Activated CD4-positive, alpha-beta memory T cell treated with anti-CD3 and anti-CD28 coated beads, Interleukin-2, amount 10 ng/mL, durations not matched to agents 7 days and 5 days (primary cell): ENCODE measurements at regions of chr21 and their contacts with region 1.

Region 1: GRCh38 chr21:42309753-42310221 is 5.4 kb downstream of the TFF3 start:
- DNase-seq: peak; percentile 76
- H3K4me3 Mint-ChIP-seq: no peak overlapping the region
- H3K27ac Mint-ChIP-seq: no peak overlapping the region
- H3K4me1 Mint-ChIP-seq: peaks cover 3% of the 10 kb centered on the region
- H3K27me3 Mint-ChIP-seq: peaks cover 16% of the 10 kb centered on the region

Region 2: DNA sequence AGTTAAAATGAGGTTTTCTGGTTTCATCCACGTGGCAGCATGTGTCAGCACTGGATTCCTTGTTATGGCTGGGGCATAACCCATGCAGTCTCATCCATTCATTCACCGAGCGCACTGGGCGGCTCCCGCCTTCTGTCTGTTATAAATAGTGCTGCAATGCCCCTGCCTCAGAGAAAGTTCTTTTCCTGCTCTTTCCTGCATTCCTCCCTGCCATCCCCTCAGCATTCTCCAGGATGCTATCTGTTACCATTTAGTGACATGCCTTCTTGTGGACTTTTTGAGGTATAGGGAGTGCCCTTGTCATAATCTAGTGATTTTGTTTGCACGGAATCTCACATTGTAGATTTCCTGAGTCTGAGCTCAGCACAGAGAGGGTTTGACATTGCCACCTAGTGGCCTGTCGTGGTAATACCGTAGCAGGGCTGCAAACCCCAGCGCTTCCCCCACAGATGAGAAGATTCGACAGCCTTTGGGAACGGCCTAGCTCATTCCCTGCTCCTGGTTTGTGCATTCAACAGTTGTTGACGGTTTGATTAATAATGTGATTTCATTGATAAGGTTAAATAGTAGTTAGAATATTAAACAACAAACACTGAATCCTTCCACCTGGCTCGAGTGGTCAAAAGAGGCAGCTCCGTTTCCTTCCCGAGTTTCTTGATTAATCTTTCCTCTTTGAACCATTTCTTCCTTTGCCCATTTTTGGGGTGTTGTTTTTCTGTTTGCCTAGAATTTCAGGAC is 192.4 kb before region 1 on chr21:
- CTCF ChIA-PET with region 1: no interaction called
- POLR2A ChIA-PET with region 1: no interaction called
- DNase-seq: peak; percentile 72
- H3K4me3 Mint-ChIP-seq: no peak overlapping the region
- H3K27ac Mint-ChIP-seq: no peak overlapping the region
- H3K4me1 Mint-ChIP-seq: peaks cover 27% of the 10 kb centered on the region
- H3K27me3 Mint-ChIP-seq: peaks cover 65% of the 10 kb centered on the region

Region 3: GRCh38 chr21:42164064-42164789 is 145.6 kb before region 1 on chr21:
- CTCF ChIA-PET with region 1: no interaction called
- POLR2A ChIA-PET with region 1: no interaction called
- DNase-seq: peak; percentile 71
- H3K4me3 Mint-ChIP-seq: no peak overlapping the region
- H3K27ac Mint-ChIP-seq: no peak overlapping the region
- H3K4me1 Mint-ChIP-seq: peaks cover 16% of the 10 kb centered on the region
- H3K27me3 Mint-ChIP-seq: peaks cover 3% of the 10 kb centered on the region

Region 4: DNA sequence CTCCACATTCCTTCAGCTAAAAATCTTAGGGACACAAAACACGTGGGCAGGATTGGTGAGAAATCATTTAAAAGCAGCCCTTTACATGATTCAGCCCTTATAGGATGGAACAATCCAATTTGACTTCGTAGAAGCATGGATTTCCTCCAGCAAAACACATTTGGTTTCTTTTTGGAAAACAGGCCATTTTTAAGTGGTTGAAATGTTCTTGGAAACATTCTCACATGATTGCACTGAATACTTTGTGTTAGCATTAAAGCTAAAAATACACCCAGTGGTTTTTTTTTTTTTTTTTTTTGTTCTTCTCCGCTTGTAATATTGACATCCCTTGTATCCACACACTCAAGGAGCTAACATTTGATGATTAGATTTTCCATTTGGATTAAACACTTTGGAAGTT is 132.9 kb before region 1 on chr21:
- CTCF ChIA-PET with region 1: no interaction called
- POLR2A ChIA-PET with region 1: no interaction called
- DNase-seq: no peak
- H3K4me3 Mint-ChIP-seq: no peak overlapping the region
- H3K27ac Mint-ChIP-seq: no peak overlapping the region
- H3K4me1 Mint-ChIP-seq: no peaks in the 10 kb centered on the region
- H3K27me3 Mint-ChIP-seq: peaks cover 34% of the 10 kb centered on the region

Region 5: DNA sequence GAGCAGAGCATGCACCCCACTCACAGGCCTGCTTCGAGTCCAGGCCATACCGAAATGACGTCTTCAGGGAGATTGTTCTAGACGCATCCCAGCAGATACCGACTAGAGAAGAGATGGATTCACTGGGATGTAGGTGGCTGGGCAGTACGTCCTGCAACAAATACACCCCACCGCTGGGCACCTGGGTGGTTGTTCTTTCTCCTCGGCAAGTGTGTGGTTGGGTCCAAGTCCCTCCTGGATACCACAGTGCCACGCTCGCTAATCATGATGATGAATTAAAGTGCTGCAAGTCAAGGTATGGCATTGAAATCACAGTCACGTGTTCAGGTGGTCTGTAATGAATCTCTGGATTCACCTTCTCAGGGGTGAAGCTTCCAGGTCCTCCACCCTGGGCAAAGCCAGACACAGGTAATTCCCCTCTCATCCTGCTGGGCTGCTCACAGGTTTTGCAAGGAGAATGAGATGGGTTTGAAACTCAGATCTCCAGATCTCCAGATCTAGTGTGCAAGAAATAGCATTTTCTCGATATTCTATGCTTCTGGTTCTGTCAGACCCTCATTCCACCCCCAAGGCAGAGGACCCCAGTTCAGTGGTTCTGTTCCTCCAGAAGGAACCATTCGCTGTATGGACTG is 139.6 kb after region 1 on chr21:
- CTCF ChIA-PET with region 1: interaction called, 15 read pairs
- POLR2A ChIA-PET with region 1: no interaction called
- DNase-seq: no peak
- H3K4me3 Mint-ChIP-seq: no peak overlapping the region
- H3K27ac Mint-ChIP-seq: peak overlapping the region; percentile 78
- H3K4me1 Mint-ChIP-seq: peaks cover 40% of the 10 kb centered on the region
- H3K27me3 Mint-ChIP-seq: no peaks in the 10 kb centered on the region